B cell (primary cell): ENCODE measurements at regions of chr19 and their contacts with region 1.

Region 1: DNA sequence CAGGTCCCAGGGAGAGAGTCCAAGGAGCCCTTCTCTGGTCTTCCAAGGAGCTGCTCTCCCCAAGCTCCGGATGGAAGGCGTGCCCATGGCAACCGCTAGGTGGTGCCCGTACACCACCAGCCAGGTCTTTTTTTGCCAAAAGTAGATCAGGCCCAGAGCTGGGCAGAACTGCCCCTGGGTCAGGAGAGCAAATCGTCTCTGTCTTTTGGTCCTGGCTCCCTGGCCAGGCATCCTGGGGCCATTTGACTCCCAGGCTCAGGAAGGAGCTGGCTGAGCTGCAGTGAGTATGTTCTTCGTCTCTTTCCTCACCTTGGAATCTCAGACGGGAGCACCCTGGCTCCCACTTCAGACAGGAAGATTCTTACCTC is 24.6 kb upstream of the BCL3 start:
- DNase-seq: peak; percentile 89
- ATAC-seq: peak; percentile 93
- H3K4me3 ChIP-seq: no peak overlapping the region
- H3K4me3 Mint-ChIP-seq: peak overlapping the region; percentile 37
- H3K27ac ChIP-seq: no peak overlapping the region
- H3K27ac Mint-ChIP-seq: peak overlapping the region; percentile 53
- H3K4me1 ChIP-seq: peaks cover 31 to 53% of the 10 kb centered on the region in 2 donors
- H3K4me1 Mint-ChIP-seq: peaks cover 44% of the 10 kb centered on the region
- H3K27me3 ChIP-seq: no peaks in the 10 kb centered on the region
- H3K27me3 Mint-ChIP-seq: no peaks in the 10 kb centered on the region
- CTCF ChIP-seq: peak; percentile 100

Region 2: GRCh38 chr19:44653977-44654774 is 69.8 kb before region 1 on chr19:
- CTCF ChIA-PET with region 1: interaction called, 20 read pairs
- POLR2A ChIA-PET with region 1: no interaction called
- intact Hi-C with region 1: loop called (anchors 2 kb)
- DNase-seq: peak; percentile 94
- ATAC-seq: peak; percentile 97
- H3K4me3 ChIP-seq: no peak overlapping the region
- H3K4me3 Mint-ChIP-seq: no peak overlapping the region
- H3K27ac ChIP-seq: peak overlapping the region; percentile 52 to 65
- H3K27ac Mint-ChIP-seq: peak overlapping the region; percentile 80
- H3K4me1 ChIP-seq: peaks cover 7 to 18% of the 10 kb centered on the region in 2 donors
- H3K4me1 Mint-ChIP-seq: peaks cover 18% of the 10 kb centered on the region
- H3K27me3 ChIP-seq: no peaks in the 10 kb centered on the region
- H3K27me3 Mint-ChIP-seq: peaks cover 6% of the 10 kb centered on the region
- CTCF ChIP-seq: peak; percentile 79

Region 3: GRCh38 chr19:44741841-44742352 is 18.0 kb after region 1 on chr19:
- CTCF ChIA-PET with region 1: interaction called, 54 read pairs
- POLR2A ChIA-PET with region 1: no interaction called
- intact Hi-C with region 1: loop called (anchors 1 kb)
- DNase-seq: no peak
- ATAC-seq: peak; percentile 46
- H3K4me3 ChIP-seq: no peak overlapping the region
- H3K4me3 Mint-ChIP-seq: no peak overlapping the region
- H3K27ac ChIP-seq: no peak overlapping the region
- H3K27ac Mint-ChIP-seq: peak overlapping the region; percentile 7
- H3K4me1 ChIP-seq: peaks cover 2 to 22% of the 10 kb centered on the region in 2 donors
- H3K4me1 Mint-ChIP-seq: peaks cover 23% of the 10 kb centered on the region
- H3K27me3 ChIP-seq: no peaks in the 10 kb centered on the region
- H3K27me3 Mint-ChIP-seq: no peaks in the 10 kb centered on the region
- CTCF ChIP-seq: no peak

Region 4: GRCh38 chr19:44770550-44771257 is 46.8 kb after region 1 on chr19:
- CTCF ChIA-PET with region 1: interaction called, 591 read pairs
- POLR2A ChIA-PET with region 1: interaction called, 34 read pairs
- intact Hi-C with region 1: loop called (anchors 1 kb)
- DNase-seq: peak; percentile 98
- ATAC-seq: peak; percentile 100
- H3K4me3 ChIP-seq: peak overlapping the region in 3 of 5 experiments; percentile 8 to 32 (median 18)
- H3K4me3 Mint-ChIP-seq: peak overlapping the region; percentile 63
- H3K27ac ChIP-seq: no peak overlapping the region
- H3K27ac Mint-ChIP-seq: peak overlapping the region; percentile 74
- H3K4me1 ChIP-seq: peaks cover 8 to 20% of the 10 kb centered on the region in 2 donors
- H3K4me1 Mint-ChIP-seq: peaks cover 28% of the 10 kb centered on the region
- H3K27me3 ChIP-seq: no peaks in the 10 kb centered on the region
- H3K27me3 Mint-ChIP-seq: no peaks in the 10 kb centered on the region
- CTCF ChIP-seq: peak; percentile 76

Region 5: GRCh38 chr19:44800461-44800860 is 76.5 kb after region 1 on chr19:
- CTCF ChIA-PET with region 1: interaction called, 18 read pairs
- POLR2A ChIA-PET with region 1: no interaction called
- intact Hi-C with region 1: loop called (anchors 2 kb)
- DNase-seq: peak; percentile 79
- ATAC-seq: peak; percentile 80
- H3K4me3 ChIP-seq: no peak overlapping the region
- H3K4me3 Mint-ChIP-seq: no peak overlapping the region
- H3K27ac ChIP-seq: no peak overlapping the region
- H3K27ac Mint-ChIP-seq: no peak overlapping the region
- H3K4me1 ChIP-seq: peaks cover 11 to 22% of the 10 kb centered on the region in 2 donors
- H3K4me1 Mint-ChIP-seq: peaks cover 8% of the 10 kb centered on the region
- H3K27me3 ChIP-seq: peaks cover 0 to 9% (median under 1%) of the 10 kb centered on the region in 4 experiments
- H3K27me3 Mint-ChIP-seq: peaks cover 25% of the 10 kb centered on the region
- CTCF ChIP-seq: peak; percentile 68

Region 6: DNA sequence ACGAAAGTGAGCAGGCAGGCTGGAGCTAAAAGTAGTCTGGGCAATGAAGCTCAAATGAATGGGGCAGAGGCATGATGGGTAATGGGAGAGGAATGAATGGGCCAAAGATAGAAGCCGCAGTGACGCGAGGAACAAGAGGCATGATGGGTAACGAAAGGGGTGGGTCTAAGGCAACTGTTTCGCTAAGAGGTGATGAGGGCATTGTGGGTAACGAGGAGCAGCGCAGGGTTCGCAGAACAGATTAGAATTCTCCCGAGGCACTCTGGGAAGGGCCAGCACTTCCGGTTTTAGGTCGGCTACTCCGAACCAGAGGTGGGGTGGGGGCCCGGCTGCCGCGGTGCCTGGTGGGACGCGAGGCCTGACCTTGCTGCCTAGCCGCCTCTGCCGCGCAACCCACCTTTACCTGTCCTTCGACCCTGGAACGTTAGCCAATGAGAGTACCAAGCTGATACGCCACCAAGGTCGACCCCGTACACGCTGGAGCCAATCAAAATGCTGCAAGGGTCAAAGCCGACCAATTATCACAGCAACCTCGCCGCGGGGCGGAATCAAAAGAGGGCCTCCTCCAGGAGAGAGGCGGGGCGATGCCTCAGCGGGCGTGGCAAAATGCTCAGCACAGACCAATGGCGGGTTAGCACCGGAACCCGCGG is 166.6 kb after region 1 on chr19:
- CTCF ChIA-PET with region 1: interaction called, 10 read pairs
- POLR2A ChIA-PET with region 1: no interaction called
- intact Hi-C with region 1: no loop called
- DNase-seq: peak; percentile 100
- ATAC-seq: peak; percentile 78
- H3K4me3 ChIP-seq: peak overlapping the region; percentile 65 to 90 (median 73)
- H3K4me3 Mint-ChIP-seq: peak overlapping the region; percentile 92
- H3K27ac ChIP-seq: peak overlapping the region; percentile 87 to 98
- H3K27ac Mint-ChIP-seq: peak overlapping the region; percentile 94
- H3K4me1 ChIP-seq: peaks cover 16 to 21% of the 10 kb centered on the region in 2 donors
- H3K4me1 Mint-ChIP-seq: peaks cover 29% of the 10 kb centered on the region
- H3K27me3 ChIP-seq: no peaks in the 10 kb centered on the region
- H3K27me3 Mint-ChIP-seq: no peaks in the 10 kb centered on the region
- CTCF ChIP-seq: no peak

Region 7: GRCh38 chr19:46000491-46001246 is 1276.7 kb after region 1 on chr19:
- CTCF ChIA-PET with region 1: no interaction called
- POLR2A ChIA-PET with region 1: no interaction called
- intact Hi-C with region 1: no loop called
- DNase-seq: peak; percentile 76
- ATAC-seq: peak; percentile 97
- H3K4me3 ChIP-seq: peak overlapping the region in 1 of 5 experiments; percentile 8
- H3K4me3 Mint-ChIP-seq: peak overlapping the region; percentile 81
- H3K27ac ChIP-seq: no peak overlapping the region
- H3K27ac Mint-ChIP-seq: no peak overlapping the region
- H3K4me1 ChIP-seq: peaks cover 21 to 23% of the 10 kb centered on the region in 2 donors
- H3K4me1 Mint-ChIP-seq: peaks cover 34% of the 10 kb centered on the region
- H3K27me3 ChIP-seq: peaks cover 0 to 16% (median 7%) of the 10 kb centered on the region in 4 experiments
- H3K27me3 Mint-ChIP-seq: peaks cover 20% of the 10 kb centered on the region
- CTCF ChIP-seq: no peak